A549 (cell line): ENCODE measurements at regions of chr13 and their contacts with region 1.

Region 1: GRCh38 chr13:21476893-21477472 is 17.9 kb upstream of the ZDHHC20 start:
- DNase-seq: peak; percentile 22 to 81
- ATAC-seq: peak; percentile 79 to 91
- H3K4me3 ChIP-seq: peak overlapping the region; percentile 43
- H3K27ac ChIP-seq: peak overlapping the region; percentile 59 to 83; a peak in 5 of 6 replicates
- H3K4me1 ChIP-seq: no peaks in the 10 kb centered on the region
- CTCF ChIP-seq: peak; percentile 79
- EP300 ChIP-seq: no peak
- POLR2A ChIP-seq: no peak
- RAD21 ChIP-seq: peak; percentile 59 to 64

Region 2: GRCh38 chr13:21435710-21436151 is 41.3 kb before region 1 on chr13:
- CTCF ChIA-PET with region 1: no interaction called
- POLR2A ChIA-PET with region 1: no interaction called
- DNase-seq: peak; percentile 22 to 58
- ATAC-seq: peak; percentile 51 to 85; a peak in 3 of 6 replicates
- H3K4me3 ChIP-seq: no peak overlapping the region
- H3K27ac ChIP-seq: peak overlapping the region in 1 of 2 experiments; percentile 11; a peak in 2 of 6 replicates
- H3K4me1 ChIP-seq: peaks cover 12% of the 10 kb centered on the region; the same call in 1 of the 3 replicates
- CTCF ChIP-seq: no peak
- EP300 ChIP-seq: no peak
- POLR2A ChIP-seq: no peak
- RAD21 ChIP-seq: no peak

Region 3: GRCh38 chr13:21465710-21466160 is 11.2 kb before region 1 on chr13:
- CTCF ChIA-PET with region 1: interaction called, 17 read pairs
- POLR2A ChIA-PET with region 1: no interaction called
- DNase-seq: no peak
- ATAC-seq: no peak
- H3K4me3 ChIP-seq: no peak overlapping the region
- H3K27ac ChIP-seq: no peak overlapping the region
- H3K4me1 ChIP-seq: no peaks in the 10 kb centered on the region
- CTCF ChIP-seq: no peak
- EP300 ChIP-seq: no peak
- POLR2A ChIP-seq: no peak
- RAD21 ChIP-seq: no peak